GM12878 (cell line): ENCODE measurements at regions of chr22 and their contacts with region 1.

Region 1: GRCh38 chr22:43036282-43036829 is 21.4 kb upstream of the PACSIN2 start:
- DNase-seq: no peak
- ATAC-seq: no peak
- H3K4me3 ChIP-seq: no peak overlapping the region
- H3K27ac ChIP-seq: no peak overlapping the region
- H3K4me1 ChIP-seq: no peaks in the 10 kb centered on the region
- H3K27me3 ChIP-seq: no peaks in the 10 kb centered on the region
- CTCF ChIP-seq: no peak
- EP300 ChIP-seq: no peak
- POLR2A ChIP-seq: no peak
- RAD21 ChIP-seq: no peak

Region 2: GRCh38 chr22:42780070-42780540 is 256.3 kb before region 1 on chr22:
- CTCF ChIA-PET with region 1: interaction called, 17 read pairs
- POLR2A ChIA-PET with region 1: no interaction called
- RAD21 ChIA-PET with region 1: interaction called, 3 read pairs
- SMC1A ChIA-PET with region 1: interaction called, 6 read pairs
- in situ Hi-C with region 1: no loop called
- intact Hi-C with region 1: no loop called
- DNase-seq: peak; percentile 59
- ATAC-seq: peak; percentile 91
- H3K4me3 ChIP-seq: no peak overlapping the region
- H3K27ac ChIP-seq: no peak overlapping the region
- H3K4me1 ChIP-seq: no peaks in the 10 kb centered on the region
- H3K27me3 ChIP-seq: no peaks in the 10 kb centered on the region
- CTCF ChIP-seq: peak; percentile 61 to 92 (median 85); a peak in 5 of 6 replicates
- EP300 ChIP-seq: no peak
- POLR2A ChIP-seq: no peak
- RAD21 ChIP-seq: peak; percentile 77

Region 3: DNA sequence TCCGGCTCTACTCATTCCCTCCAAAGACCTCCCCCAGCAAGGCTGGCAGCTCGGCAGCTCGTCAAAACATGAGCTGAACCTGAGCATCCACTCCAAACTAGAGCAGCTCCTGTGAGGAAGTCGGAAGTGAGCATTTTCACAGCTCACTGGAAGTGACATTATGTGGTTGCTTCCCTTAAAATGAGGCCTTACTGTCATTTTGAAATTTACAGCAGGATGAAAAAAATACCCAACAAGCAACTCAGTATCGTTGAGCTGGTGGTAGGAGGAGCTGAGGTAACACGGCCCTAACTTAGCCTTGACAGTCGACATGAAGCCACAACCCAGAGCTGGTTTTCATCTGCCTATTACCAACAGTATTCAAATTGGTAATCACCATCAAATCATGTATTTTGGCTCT is 141.3 kb before region 1 on chr22:
- CTCF ChIA-PET with region 1: interaction called, 19 read pairs
- POLR2A ChIA-PET with region 1: interaction called, 3 read pairs
- RAD21 ChIA-PET with region 1: interaction called, 7 read pairs
- SMC1A ChIA-PET with region 1: interaction called, 16 read pairs
- in situ Hi-C with region 1: no loop called
- intact Hi-C with region 1: no loop called
- DNase-seq: peak; percentile 76
- ATAC-seq: peak; percentile 81
- H3K4me3 ChIP-seq: no peak overlapping the region
- H3K27ac ChIP-seq: peak overlapping the region; percentile 69
- H3K4me1 ChIP-seq: peaks cover 68% of the 10 kb centered on the region
- H3K27me3 ChIP-seq: no peaks in the 10 kb centered on the region
- CTCF ChIP-seq: no peak
- EP300 ChIP-seq: no peak
- POLR2A ChIP-seq: no peak
- RAD21 ChIP-seq: no peak

Region 4: DNA sequence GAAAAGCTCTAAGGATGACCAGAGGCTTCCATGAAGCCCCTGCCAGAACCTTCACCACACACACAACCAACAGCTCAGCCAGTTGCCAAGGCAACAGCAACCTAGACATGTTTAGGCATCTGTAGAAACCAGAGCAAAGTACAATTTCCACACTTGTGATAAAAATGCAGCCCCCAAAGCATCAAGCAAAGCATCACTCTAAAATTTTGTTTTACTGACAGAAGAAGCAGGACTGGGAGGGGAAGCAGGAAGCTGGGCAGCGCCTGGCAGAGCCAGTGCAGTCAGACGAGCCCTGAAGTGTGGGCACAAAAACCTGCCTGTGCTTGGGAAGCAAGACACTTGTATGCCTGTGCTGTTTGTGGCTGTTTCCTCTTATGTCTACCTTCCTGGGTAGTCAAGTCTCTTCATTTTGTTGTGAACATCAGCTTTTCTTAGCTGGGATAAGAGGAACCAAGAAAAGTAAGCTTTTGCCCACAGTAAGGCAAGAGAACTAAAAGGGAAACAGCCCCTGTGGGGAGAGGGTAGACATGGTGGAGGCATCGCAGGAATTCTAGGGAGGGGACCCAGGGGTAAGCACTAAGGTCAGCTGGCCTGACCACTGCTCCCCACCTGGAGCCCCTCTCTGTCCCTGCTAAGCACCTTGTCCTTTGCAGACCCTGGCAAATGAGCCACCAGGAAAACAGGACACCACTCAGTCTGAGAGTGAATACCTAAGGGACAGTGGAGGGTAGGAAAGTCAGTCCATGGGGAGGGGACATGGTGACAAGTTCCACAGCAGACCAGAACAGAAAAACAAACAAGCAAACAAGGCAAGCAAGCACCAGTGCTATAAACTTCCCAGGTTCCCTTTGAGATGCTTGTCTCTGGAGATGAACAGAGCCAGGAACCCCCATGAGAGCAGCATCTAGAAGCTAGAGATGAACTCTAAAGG is 34.8 kb before region 1 on chr22:
- CTCF ChIA-PET with region 1: interaction called, 4 read pairs
- POLR2A ChIA-PET with region 1: no interaction called
- RAD21 ChIA-PET with region 1: no interaction called
- SMC1A ChIA-PET with region 1: interaction called, 10 read pairs
- in situ Hi-C with region 1: no loop called
- intact Hi-C with region 1: no loop called
- DNase-seq: no peak
- ATAC-seq: peak; percentile 67
- H3K4me3 ChIP-seq: peak overlapping the region; percentile 22
- H3K27ac ChIP-seq: peak overlapping the region; percentile 77
- H3K4me1 ChIP-seq: peaks cover 73% of the 10 kb centered on the region
- H3K27me3 ChIP-seq: no peaks in the 10 kb centered on the region
- CTCF ChIP-seq: no peak
- EP300 ChIP-seq: no peak
- POLR2A ChIP-seq: no peak
- RAD21 ChIP-seq: no peak

Region 5: DNA sequence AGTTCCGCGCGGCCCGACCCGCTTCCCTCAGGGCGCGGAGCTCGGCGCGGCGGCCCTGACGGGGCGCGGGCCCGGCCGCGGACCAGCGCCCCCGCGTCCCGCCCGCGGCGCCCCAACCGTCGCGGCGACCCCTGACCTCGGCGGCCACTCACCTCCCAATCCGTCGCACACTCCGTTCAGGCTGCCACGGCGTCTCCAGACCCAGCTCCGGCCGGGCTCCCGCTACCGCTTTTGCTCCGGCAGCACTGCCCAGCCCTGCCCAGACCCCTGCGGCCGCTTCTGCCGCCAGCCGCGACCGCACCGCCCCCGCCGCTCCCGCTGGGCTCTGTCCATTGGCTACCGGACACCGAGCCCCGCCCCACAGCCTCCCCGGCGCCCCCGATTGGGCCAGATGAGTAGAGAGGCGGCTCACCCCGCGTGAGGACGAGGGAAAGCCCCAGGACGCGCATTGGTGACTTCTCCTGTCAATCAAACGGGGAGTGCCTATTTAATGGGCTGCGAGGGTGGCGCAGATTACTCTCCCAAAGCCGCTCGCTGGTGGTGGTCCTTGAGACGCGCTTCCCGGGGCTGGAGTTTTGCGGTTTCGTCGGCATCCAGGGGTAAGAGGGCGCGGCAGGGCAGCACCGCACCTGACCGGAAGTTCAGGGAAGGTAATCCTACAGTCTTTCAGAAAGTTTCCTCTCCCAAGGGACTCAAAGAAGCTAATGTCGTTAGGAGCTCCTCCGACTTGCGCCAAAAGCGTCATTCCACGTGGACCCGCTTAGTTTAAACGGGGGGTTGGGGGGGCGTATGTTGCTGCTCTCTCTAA is 21.3 kb before region 1 on chr22 and contains the start of gene PACSIN2:
- CTCF ChIA-PET with region 1: interaction called, 8 read pairs
- POLR2A ChIA-PET with region 1: no interaction called
- RAD21 ChIA-PET with region 1: interaction called, 14 read pairs
- SMC1A ChIA-PET with region 1: interaction called, 6 read pairs
- in situ Hi-C with region 1: no loop called
- intact Hi-C with region 1: no loop called
- DNase-seq: peak; percentile 82
- ATAC-seq: peak; percentile 98
- H3K4me3 ChIP-seq: peak within 1 kb of the TSS; percentile 97
- H3K27ac ChIP-seq: peak within 1 kb of the TSS; percentile 68
- H3K4me1 ChIP-seq: no peaks in the 10 kb centered on the region
- H3K27me3 ChIP-seq: no peaks in the 10 kb centered on the region
- CTCF ChIP-seq: 0 out of 6 replicates have a peak, but pooled peaks of 1 of the 3 experiments have one; percentile 0
- EP300 ChIP-seq: no peak
- POLR2A ChIP-seq: peak; percentile 99
- RAD21 ChIP-seq: no peak
- polyA plus RNA-seq, gene PACSIN2: 0.93 to 1.6 TPM

Region 6: DNA sequence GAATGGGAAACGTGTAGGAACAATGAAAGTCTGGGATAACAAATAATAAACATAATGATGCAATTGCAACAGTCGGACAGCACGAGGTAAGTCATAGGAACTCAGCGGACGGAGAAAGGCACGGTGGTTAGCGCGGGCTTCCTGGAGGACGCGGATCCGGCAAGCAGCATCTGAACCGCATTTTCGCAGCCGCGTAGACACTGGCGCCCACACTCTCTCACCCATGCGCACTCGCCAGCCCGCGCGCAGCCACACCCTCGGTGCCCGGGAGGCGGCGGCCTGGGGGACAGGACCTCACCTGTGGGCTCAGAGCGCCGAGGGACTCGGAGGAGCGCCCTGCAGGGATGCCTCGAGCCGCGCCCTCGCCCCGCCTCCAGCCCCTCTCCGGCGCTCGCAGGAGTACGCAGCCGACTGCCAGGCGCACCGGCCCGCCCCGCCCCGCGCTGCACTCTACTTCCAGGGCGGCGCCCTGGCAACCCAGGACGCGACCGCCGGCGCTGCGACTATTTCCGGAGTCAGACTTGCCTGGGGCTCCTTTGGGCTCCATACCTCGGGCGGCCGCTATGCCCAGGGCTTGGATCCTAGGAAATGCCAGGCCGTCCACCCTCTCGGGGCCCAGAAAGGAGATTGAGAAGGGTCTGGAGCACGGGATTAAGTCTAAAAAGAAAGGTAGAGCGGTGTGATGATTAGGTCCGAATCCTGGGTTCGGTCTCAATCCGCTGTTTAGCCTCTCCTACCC is 52.8 kb after region 1 on chr22 and contains the start of gene TTLL1:
- CTCF ChIA-PET with region 1: interaction called, 10 read pairs
- POLR2A ChIA-PET with region 1: no interaction called
- RAD21 ChIA-PET with region 1: interaction called, 4 read pairs
- SMC1A ChIA-PET with region 1: no interaction called
- in situ Hi-C with region 1: no loop called
- intact Hi-C with region 1: no loop called
- DNase-seq: peak; percentile 27
- ATAC-seq: peak; percentile 96
- H3K4me3 ChIP-seq: peak within 1 kb of the TSS; percentile 74
- H3K27ac ChIP-seq: peak within 1 kb of the TSS; percentile 27; the same call in 1 of the 2 replicates
- H3K4me1 ChIP-seq: peaks cover 15% of the 10 kb centered on the region
- H3K27me3 ChIP-seq: no peaks in the 10 kb centered on the region
- CTCF ChIP-seq: no peak
- EP300 ChIP-seq: no peak
- POLR2A ChIP-seq: peak; percentile 84
- RAD21 ChIP-seq: no peak
- polyA plus RNA-seq, gene TTLL1: 0.39 to 0.80 TPM